ENCODE measurements at regions of chr9 and their contacts with region 1.

Region 1: DNA sequence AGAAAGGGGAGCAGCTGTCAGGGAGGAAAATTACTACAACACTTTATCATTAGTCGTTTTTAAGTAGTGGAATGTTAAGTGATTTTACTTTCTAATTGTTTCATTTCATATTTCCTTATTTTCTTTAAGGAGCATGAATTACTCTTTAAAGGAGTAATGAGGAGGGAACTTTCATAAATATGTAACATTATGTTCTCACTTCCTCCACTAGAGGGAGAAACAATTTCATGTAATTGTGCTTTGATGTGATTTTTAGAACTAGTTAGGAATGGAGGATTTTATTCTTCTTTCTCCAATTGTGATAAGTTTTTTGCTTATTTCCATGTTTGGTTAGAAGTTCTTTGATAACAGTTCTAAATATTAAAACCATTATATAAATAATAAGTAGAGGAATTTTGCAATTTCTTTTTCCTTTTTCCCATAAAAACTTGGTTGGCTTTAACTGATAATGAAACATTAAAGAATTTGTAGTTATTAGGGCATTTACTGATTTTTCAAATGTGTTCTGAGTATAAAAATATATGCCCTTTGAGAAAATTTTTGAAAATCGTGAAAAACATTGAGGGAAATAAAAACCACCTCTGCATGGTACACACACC is 25.6 kb downstream of the CEP78 start:
- DNase-seq: no peak
- H3K4me3 Mint-ChIP-seq: no peak overlapping the region
- H3K27ac Mint-ChIP-seq: no peak overlapping the region
- H3K4me1 Mint-ChIP-seq: no peaks in the 10 kb centered on the region
- H3K27me3 Mint-ChIP-seq: no peaks in the 10 kb centered on the region

Region 2: GRCh38 chr9:77876091-77876490 is 385.4 kb before region 1 on chr9:
- intact Hi-C with region 1: no loop called
- DNase-seq: no peak
- H3K4me3 Mint-ChIP-seq: no peak overlapping the region
- H3K27ac Mint-ChIP-seq: no peak overlapping the region
- H3K4me1 Mint-ChIP-seq: no peaks in the 10 kb centered on the region
- H3K27me3 Mint-ChIP-seq: no peaks in the 10 kb centered on the region

Region 3: GRCh38 chr9:78296893-78297671 is 35.6 kb after region 1 on chr9 and contains the start of gene PSAT1:
- intact Hi-C with region 1: loop called (anchors 1 kb)
- DNase-seq: peak; percentile 92
- H3K4me3 Mint-ChIP-seq: peak within 1 kb of the TSS; percentile 91
- H3K27ac Mint-ChIP-seq: peak within 1 kb of the TSS; percentile 91
- H3K4me1 Mint-ChIP-seq: peaks cover 61% of the 10 kb centered on the region
- H3K27me3 Mint-ChIP-seq: no peaks in the 10 kb centered on the region
- total RNA-seq, gene PSAT1: 85.7 and 91.8 TPM in 2 replicates

Region 4: GRCh38 chr9:78314953-78315870 is 53.7 kb after region 1 on chr9:
- intact Hi-C with region 1: no loop called
- DNase-seq: no peak
- H3K4me3 Mint-ChIP-seq: no peak overlapping the region
- H3K27ac Mint-ChIP-seq: no peak overlapping the region
- H3K4me1 Mint-ChIP-seq: no peaks in the 10 kb centered on the region
- H3K27me3 Mint-ChIP-seq: no peaks in the 10 kb centered on the region

Region 5: DNA sequence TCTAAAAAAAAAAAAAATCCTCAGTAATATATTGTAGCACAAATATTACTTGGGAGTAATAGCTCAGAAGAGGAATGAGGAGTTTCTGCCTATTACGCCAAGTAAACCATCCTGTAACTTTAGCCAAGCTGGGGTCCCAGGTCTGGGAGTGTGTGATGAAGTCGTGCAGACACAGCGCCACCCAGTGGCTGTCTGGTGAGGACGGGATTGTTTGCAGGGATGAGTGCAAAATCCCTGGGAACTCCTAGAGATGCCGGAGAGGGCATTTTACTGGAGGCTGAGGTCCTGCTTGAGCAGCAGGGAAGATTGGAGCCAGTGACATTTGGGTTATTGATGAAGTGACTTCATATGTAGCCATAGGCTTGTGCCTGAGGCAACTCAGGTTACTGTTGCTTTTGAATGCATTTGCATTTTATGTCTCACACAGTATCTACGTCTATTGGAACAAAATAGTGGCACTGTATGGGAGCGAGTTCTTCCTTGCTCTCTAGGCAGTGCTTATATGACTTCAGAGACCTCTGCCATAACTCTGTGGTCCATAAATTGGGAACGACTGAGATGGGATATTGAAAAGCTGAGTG is 108.2 kb after region 1 on chr9:
- intact Hi-C with region 1: loop called (anchors 1 kb)
- DNase-seq: peak; percentile 15
- H3K4me3 Mint-ChIP-seq: no peak overlapping the region
- H3K27ac Mint-ChIP-seq: no peak overlapping the region
- H3K4me1 Mint-ChIP-seq: peaks cover 11% of the 10 kb centered on the region
- H3K27me3 Mint-ChIP-seq: peaks cover 8% of the 10 kb centered on the region